Right ventricle myocardium superior (tissue), 1 donor: ENCODE measurements at regions of chr6 and their contacts with region 1.

Region 1: GRCh38 chr6:34964564-34964963 is 75.5 kb downstream of the ANKS1A start:
- DNase-seq: no peak
- ATAC-seq: peak; percentile 75

Region 2: GRCh38 chr6:34887753-34888513 is 76.6 kb before region 1 on chr6 and contains the start of gene TAF11:
- intact Hi-C with region 1: loop called (anchors 5 kb)
- DNase-seq: peak; percentile 97
- ATAC-seq: peak; percentile 94
- total RNA-seq, gene TAF11: 13.7 TPM